B cell (primary cell): ENCODE measurements at regions of chr2 and their contacts with region 1.

Region 1: DNA sequence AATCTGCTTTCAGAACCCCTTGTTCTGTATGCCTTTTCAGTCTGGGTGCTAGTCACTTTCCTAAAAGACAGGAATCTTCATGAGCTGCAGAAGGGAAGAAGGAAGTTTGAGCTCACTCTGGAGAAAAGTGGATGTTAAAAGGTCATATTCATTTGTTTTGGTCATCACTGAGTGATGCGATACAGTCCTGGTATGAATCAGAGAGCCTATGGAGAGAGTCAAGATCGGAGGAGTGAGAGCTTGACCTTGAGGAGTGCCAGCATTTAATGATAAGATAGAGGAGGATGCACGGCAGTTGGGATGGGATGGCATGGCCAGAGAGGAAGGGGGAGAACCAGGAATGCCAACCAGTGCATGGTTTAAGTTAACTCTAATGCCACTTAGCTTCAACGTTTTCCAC is 19.6 kb downstream of the USP39 start:
- DNase-seq: no peak
- ATAC-seq: no peak
- H3K4me3 ChIP-seq: no peak overlapping the region
- H3K4me3 Mint-ChIP-seq: no peak overlapping the region
- H3K27ac ChIP-seq: no peak overlapping the region
- H3K27ac Mint-ChIP-seq: no peak overlapping the region
- H3K4me1 ChIP-seq: no peaks in the 10 kb centered on the region
- H3K4me1 Mint-ChIP-seq: peaks cover 4% of the 10 kb centered on the region
- H3K27me3 ChIP-seq: no peaks in the 10 kb centered on the region
- H3K27me3 Mint-ChIP-seq: no peaks in the 10 kb centered on the region
- CTCF ChIP-seq: no peak

Region 2: GRCh38 chr2:85619617-85620016 is 16.0 kb before region 1 on chr2:
- CTCF ChIA-PET with region 1: interaction called, 23 read pairs
- POLR2A ChIA-PET with region 1: interaction called, 4 read pairs
- intact Hi-C with region 1: no loop called
- DNase-seq: no peak
- ATAC-seq: no peak
- H3K4me3 ChIP-seq: no peak overlapping the region
- H3K4me3 Mint-ChIP-seq: no peak overlapping the region
- H3K27ac ChIP-seq: no peak overlapping the region
- H3K27ac Mint-ChIP-seq: no peak overlapping the region
- H3K4me1 ChIP-seq: peaks cover 15 to 23% of the 10 kb centered on the region in 2 donors
- H3K4me1 Mint-ChIP-seq: peaks cover 21% of the 10 kb centered on the region
- H3K27me3 ChIP-seq: no peaks in the 10 kb centered on the region
- H3K27me3 Mint-ChIP-seq: no peaks in the 10 kb centered on the region
- CTCF ChIP-seq: no peak

Region 3: DNA sequence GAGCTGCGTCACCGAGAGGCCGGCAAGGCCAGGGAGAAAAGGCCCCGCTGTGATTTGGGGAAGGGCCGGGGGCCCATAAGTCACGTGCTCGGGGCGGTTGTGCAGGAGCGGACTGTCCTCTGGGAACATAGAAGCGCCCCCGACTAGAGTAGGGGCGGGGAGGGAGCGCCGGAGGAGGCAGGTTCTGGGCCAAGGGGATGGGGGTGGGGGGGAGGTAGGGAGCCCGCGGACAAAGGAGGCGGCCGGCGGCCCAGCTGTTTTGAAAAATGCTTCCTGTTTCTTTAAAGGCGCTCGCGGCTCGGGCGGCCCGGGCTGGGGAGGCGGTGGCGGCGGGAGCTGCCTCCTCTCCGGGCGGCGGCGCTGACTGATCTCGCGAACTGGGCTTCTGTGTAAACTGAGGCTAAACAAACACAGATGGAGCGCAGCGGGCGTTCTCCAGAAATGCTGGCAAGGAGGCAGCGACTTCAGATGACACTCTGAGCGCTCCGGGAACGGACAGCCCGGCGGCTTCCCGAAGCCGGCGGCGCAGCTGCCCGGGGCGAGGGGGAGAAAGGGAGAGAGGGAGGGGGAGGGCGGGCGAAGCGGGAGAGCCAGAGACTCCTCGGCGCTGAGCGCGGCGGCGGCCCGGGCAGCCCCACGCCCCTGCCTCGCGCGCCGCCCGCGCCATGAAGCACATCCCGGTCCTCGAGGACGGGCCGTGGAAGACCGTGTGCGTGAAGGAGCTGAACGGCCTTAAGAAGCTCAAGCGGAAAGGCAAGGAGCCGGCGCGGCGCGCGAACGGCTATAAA is 118.1 kb after region 1 on chr2 and contains the start of gene ATOH8:
- CTCF ChIA-PET with region 1: no interaction called
- POLR2A ChIA-PET with region 1: no interaction called
- intact Hi-C with region 1: no loop called
- DNase-seq: peak; percentile 65
- ATAC-seq: peak; percentile 37
- H3K4me3 ChIP-seq: peak within 1 kb of the TSS in 4 of 5 experiments; percentile 40 to 76 (median 54)
- H3K4me3 Mint-ChIP-seq: peak within 1 kb of the TSS; percentile 90
- H3K27ac ChIP-seq: no peak within 1 kb of the TSS
- H3K27ac Mint-ChIP-seq: peak within 1 kb of the TSS; percentile 53
- H3K4me1 ChIP-seq: peaks cover 37 to 43% of the 10 kb centered on the region in 2 donors
- H3K4me1 Mint-ChIP-seq: peaks cover 37% of the 10 kb centered on the region
- H3K27me3 ChIP-seq: peaks cover 0 to 71% (median 32%) of the 10 kb centered on the region in 4 experiments
- H3K27me3 Mint-ChIP-seq: peaks cover 39% of the 10 kb centered on the region
- CTCF ChIP-seq: no peak
- total RNA-seq, gene ATOH8: not detected in 2 replicates